ENCODE measurements at regions of chr12 and their contacts with region 1.

Region 1: GRCh38 chr12:110600254-110600653 is 13.7 kb upstream of the TCTN1 start:
- DNase-seq: peak in 1 of 2 experiments; percentile 58
- H3K4me3 ChIP-seq: no peak overlapping the region
- H3K27ac ChIP-seq: no peak overlapping the region
- H3K4me1 ChIP-seq: no peaks in the 10 kb centered on the region
- H3K27me3 ChIP-seq: no peaks in the 10 kb centered on the region
- CTCF ChIP-seq: peak; percentile 85

Region 2: DNA sequence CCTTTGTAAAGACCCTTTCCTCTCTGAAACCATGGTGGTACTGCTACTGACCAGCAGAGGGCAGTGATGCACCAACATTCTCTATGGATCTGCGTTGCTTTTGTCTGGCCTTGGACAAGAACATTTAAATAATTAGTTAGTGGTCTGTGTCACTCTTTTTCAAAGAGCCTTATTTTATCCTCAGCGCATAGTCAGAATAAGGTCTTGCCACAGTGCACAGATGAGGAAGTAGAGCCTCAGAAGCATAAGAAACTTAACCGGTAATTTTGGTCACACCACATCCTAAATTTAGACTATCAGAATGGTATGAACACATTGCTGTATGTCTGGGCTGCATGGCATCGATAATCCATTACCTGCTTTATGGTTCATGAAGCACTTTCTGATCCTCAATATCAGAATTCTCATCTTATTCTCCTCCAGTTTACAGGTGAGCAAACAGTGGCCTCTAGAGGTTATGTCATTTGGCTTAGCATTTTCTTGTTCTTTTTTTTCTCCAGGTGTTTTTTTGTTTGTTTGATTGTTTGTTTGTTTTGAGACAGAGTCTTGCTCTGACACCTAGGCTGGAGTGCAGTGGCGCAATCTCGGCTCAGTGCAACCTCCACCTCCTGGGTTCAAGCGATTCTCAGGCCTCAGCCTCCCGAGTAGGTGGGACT is 499.8 kb before region 1 on chr12:
- CTCF ChIA-PET with region 1: interaction called, 11 read pairs
- POLR2A ChIA-PET with region 1: no interaction called
- intact Hi-C with region 1: loop called (anchors 1 kb)
- DNase-seq: peak; percentile 53 to 60
- H3K4me3 ChIP-seq: no peak overlapping the region
- H3K27ac ChIP-seq: no peak overlapping the region
- H3K4me1 ChIP-seq: no peaks in the 10 kb centered on the region
- H3K27me3 ChIP-seq: no peaks in the 10 kb centered on the region
- CTCF ChIP-seq: peak; percentile 97

Region 3: DNA sequence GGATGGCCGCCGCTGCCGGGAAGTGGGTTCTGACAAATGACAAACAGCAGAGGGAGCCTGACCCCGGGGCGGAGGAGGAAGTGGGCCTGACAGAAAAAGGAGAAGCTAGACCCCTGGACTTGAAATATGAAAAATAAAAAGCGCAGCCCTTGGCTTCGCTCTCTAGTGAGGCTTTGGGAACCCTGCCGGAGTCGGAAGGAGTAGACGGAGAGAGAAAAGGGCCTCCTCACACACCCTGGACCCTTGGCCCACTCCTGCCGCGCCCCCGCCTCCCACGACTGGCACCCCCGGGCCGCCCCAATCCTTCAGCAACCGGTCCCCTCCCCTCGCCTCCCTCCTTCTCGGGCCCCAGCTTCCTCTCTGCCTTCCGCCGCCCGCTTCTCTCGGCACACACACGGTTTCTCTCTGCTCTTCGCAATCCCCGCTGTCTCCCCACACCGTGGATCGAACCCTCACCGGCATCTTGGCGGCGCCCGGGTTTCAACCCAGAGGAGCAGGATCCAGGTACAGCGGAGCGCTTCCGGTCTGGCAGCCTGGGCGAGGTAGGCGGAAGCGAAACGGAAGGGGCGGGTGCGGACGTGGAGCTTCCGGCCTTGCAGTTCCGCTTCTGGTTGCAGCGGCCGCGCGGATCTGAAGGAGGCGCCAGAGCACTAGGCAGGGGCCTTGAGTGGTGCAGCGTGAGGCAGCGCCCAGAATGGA is 150.3 kb before region 1 on chr12 and contains the start of gene ARPC3:
- CTCF ChIA-PET with region 1: interaction called, 18 read pairs
- POLR2A ChIA-PET with region 1: no interaction called
- intact Hi-C with region 1: loop called (anchors 1 kb)
- DNase-seq: peak; percentile 90 to 93
- H3K4me3 ChIP-seq: peak within 1 kb of the TSS; percentile 94
- H3K27ac ChIP-seq: peak within 1 kb of the TSS; percentile 61
- H3K4me1 ChIP-seq: 0 out of 2 replicates have a peak, but pooled peaks cover 4% of the 10 kb centered on the region
- H3K27me3 ChIP-seq: no peaks in the 10 kb centered on the region
- CTCF ChIP-seq: peak; percentile 77
- total RNA-seq, gene ARPC3: 167 and 229 TPM in 2 replicates

Region 4: DNA sequence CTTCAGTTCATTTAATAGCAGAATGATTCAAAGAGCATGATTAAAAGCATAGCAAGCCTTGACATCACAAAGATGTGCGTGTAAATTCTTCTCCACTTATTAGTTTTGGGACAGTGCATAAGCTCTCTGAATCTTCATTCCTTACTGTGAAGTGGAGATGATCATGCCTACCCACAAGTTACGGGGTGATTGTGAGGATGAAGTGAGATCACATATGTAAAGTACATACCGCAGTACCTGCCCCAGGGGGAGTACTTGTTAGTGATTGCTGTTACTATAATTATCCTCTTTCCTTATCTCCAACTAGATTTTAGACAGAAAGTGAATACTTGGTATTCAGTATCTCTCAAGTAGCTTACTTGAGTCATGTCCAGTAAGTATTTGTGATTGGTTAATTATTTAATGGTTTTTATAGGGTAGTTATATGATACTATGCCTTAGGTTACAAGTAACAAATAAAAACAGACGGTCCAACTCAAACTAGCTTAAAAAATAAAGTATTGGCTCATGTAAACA is 92.1 kb before region 1 on chr12:
- CTCF ChIA-PET with region 1: interaction called, 18 read pairs
- POLR2A ChIA-PET with region 1: no interaction called
- intact Hi-C with region 1: loop called (anchors 1 kb)
- DNase-seq: no peak
- H3K4me3 ChIP-seq: no peak overlapping the region
- H3K27ac ChIP-seq: no peak overlapping the region
- H3K4me1 ChIP-seq: no peaks in the 10 kb centered on the region
- H3K27me3 ChIP-seq: no peaks in the 10 kb centered on the region
- CTCF ChIP-seq: no peak

Region 5: GRCh38 chr12:110555577-110556406 is 44.5 kb before region 1 on chr12:
- CTCF ChIA-PET with region 1: interaction called, 6 read pairs
- POLR2A ChIA-PET with region 1: no interaction called
- intact Hi-C with region 1: loop called (anchors 1 kb)
- DNase-seq: peak in 1 of 2 experiments; percentile 43
- H3K4me3 ChIP-seq: no peak overlapping the region
- H3K27ac ChIP-seq: peak overlapping the region; percentile 58
- H3K4me1 ChIP-seq: peaks cover 24% of the 10 kb centered on the region
- H3K27me3 ChIP-seq: no peaks in the 10 kb centered on the region
- CTCF ChIP-seq: no peak

Region 6: DNA sequence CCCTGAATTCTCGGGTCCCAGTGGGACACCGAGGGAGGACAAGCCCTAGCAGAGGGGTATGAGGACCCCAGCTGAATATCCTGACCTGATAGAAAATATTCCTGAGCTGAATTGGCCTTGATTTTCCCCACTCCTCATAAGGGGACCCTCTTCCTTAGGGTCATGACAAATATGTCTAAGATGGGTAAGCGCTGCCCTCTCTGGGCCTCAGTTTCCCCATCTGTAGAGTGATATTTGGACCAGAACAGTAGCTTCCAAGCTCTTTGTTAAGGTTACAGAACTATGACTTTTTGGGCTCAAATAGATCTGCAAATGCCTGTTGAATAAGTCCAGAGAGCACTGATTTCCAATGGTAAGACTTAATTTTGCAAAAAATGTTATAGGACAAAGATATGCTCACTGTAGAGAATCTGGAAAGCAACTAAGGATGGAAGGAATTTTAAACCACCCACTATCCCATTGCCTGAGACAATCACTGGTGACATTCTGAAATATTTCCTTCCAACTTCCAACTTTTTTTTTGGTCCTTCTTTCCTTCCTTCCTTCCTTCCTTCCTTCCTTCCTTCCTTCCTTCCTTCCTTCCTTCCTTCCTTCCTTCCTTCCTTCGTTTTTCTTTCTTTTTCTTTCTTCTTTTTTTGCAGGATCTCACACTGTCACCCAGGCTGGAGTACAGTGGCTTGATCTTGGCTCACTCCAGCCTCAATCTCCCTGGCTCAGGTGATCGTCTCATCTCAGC is 288.2 kb after region 1 on chr12:
- CTCF ChIA-PET with region 1: interaction called, 5 read pairs
- POLR2A ChIA-PET with region 1: no interaction called
- intact Hi-C with region 1: loop called (anchors 5 kb)
- DNase-seq: no peak
- H3K4me3 ChIP-seq: peak overlapping the region; percentile 65
- H3K27ac ChIP-seq: no peak overlapping the region
- H3K4me1 ChIP-seq: no peaks in the 10 kb centered on the region
- H3K27me3 ChIP-seq: peaks cover 3% of the 10 kb centered on the region; the same call in 1 of the 2 replicates
- CTCF ChIP-seq: peak; percentile 66; the same call in 1 of the 2 replicates

Measured in PC-9 (cell line).